PC-9 (cell line): ENCODE measurements at regions of chr4 and their contacts with region 1.

Region 1: DNA sequence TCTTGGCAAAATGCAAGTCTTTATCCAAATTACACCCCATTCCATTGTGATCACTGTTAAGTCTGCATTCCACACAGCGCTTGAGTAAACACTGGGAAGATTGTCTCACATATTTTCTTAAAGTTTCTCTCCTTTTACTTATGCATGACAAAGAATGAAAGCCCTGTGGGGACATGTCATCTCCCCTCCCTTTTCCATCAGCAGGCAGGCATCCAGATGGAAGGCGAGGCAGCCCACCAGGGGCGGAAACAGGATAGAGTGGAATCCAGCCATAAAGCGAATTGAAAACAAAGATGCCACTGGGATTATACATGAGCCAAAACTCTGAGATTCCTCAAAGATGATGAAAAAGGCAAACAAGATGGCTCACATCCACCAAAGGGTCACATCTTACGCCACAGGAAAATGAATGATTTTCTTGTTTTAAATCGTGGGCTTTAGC is 78.2 kb downstream of the AFAP1 start:
- DNase-seq: peak; percentile 56 to 78
- H3K4me3 ChIP-seq: no peak overlapping the region
- H3K27ac ChIP-seq: peak overlapping the region; percentile 37; the same call in 1 of the 2 replicates
- H3K4me1 ChIP-seq: 0 out of 2 replicates have a peak, but pooled peaks cover 5% of the 10 kb centered on the region
- H3K27me3 ChIP-seq: no peaks in the 10 kb centered on the region
- CTCF ChIP-seq: no peak

Region 2: DNA sequence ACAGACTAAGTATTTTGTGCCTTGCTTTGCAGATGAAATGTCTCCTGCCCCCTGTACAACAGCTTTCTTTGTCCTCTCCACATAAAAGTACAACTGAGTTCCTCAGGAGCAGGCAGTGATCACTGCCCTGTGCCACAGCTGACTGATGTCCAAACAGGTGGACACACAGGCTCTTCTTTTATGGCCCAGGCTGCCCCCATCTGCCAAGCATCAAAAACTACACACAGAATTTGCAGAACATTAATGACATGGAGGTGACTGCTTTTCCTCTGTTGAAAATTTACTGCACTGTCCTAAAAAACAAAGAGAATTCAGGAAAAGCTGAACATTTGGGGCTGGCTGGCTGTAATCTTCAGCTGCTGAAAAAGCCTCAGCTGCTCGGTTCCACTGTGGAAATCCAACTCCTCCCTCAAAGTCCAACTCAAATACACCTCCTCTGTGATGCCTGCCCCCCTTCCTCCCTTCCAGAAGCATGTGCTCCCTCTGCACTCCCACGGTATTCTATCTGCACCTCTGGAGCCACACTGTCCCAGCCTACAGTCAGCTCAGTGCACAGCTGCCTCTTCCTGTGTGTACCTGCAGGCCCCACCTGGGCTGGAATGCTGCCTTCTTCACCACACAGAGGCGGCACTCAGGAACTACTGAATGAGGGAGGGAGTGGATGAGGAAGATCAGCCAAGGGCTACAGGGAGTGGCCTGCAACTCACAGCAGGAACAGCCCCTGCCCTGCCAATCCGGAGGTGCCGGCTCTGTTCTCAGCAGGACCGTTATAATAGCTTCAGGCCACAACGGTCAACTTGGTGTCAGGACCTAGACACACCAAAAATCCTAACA is 67.9 kb after region 1 on chr4:
- CTCF ChIA-PET with region 1: no interaction called
- POLR2A ChIA-PET with region 1: no interaction called
- intact Hi-C with region 1: no loop called
- DNase-seq: peak; percentile 77 to 82
- H3K4me3 ChIP-seq: no peak overlapping the region
- H3K27ac ChIP-seq: no peak overlapping the region
- H3K4me1 ChIP-seq: peaks cover 31% of the 10 kb centered on the region
- H3K27me3 ChIP-seq: no peaks in the 10 kb centered on the region
- CTCF ChIP-seq: 0 out of 2 replicates have a peak, but pooled peaks have one; percentile 22

Region 3: DNA sequence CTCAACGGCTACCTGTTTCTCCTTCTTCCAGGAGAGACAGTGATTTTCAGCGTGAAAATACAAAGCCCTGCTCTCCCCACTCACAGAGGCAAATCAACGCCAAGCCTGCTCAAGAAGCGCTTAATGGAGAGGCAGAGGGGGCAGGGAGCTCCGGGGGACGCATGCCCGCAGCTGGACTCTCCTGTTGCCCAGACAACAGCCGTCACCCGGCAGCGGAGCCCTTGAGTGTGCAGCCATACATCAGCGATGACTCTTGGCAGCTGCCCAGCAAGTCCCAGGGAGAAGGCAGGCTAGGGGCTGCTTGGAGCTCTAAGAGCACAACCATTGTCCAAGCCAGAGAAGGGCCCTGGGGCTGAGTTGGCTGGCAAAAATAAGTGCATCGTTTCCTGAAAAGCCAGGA is 149.2 kb after region 1 on chr4:
- CTCF ChIA-PET with region 1: no interaction called
- POLR2A ChIA-PET with region 1: no interaction called
- intact Hi-C with region 1: no loop called
- DNase-seq: no peak
- H3K4me3 ChIP-seq: no peak overlapping the region
- H3K27ac ChIP-seq: no peak overlapping the region
- H3K4me1 ChIP-seq: no peaks in the 10 kb centered on the region
- H3K27me3 ChIP-seq: no peaks in the 10 kb centered on the region
- CTCF ChIP-seq: no peak

Region 4: DNA sequence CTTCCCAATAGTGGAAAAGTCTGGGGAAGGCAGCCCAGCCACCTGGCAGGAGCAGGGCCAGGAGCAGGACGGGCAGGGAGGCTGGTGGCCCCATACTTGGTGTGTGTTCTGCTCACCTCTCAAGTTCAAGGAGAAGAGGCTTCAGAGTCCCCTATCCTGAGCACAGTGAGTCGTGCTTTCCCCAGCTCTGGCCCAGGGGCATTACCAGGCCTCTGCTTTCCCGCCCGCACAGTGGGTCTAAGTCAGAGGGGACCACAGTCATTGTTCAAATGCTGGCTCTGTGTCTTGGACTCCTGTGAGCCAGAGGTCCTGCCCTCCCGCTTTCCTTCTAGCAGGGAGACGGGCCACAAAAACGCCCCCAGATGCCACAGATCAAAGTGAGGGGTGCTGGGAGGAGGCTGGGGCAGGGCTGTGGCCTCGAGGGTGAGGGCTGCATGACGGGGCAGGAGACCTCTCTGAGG is 435.7 kb after region 1 on chr4:
- CTCF ChIA-PET with region 1: no interaction called
- POLR2A ChIA-PET with region 1: interaction called, 12 read pairs
- intact Hi-C with region 1: no loop called
- DNase-seq: no peak
- H3K4me3 ChIP-seq: no peak overlapping the region
- H3K27ac ChIP-seq: no peak overlapping the region
- H3K4me1 ChIP-seq: no peaks in the 10 kb centered on the region
- H3K27me3 ChIP-seq: no peaks in the 10 kb centered on the region
- CTCF ChIP-seq: no peak